Activated T-helper 1 cell treated with anti-CD3 and anti-CD28 coated beads, Interleukin-12 subunit alpha, Interleukin-12 subunit beta, Interleukin-2, Interleukin-4 antibody, amounts not matched to agents 30 ng/mL and 10 ng/mL and 1 ng/mL, durations not matched to agents 14 hours and 24 hours and 36 hours (primary cell): ENCODE measurements at regions of chr9 and their contacts with region 1.

Region 1: GRCh38 chr9:6412487-6413364 is at the start of gene UHRF2:
- DNase-seq: peak; percentile 97
- H3K4me3 Mint-ChIP-seq: peak within 1 kb of the TSS; percentile 89
- H3K27ac Mint-ChIP-seq: peak within 1 kb of the TSS; percentile 92
- H3K4me1 Mint-ChIP-seq: peaks cover 27% of the 10 kb centered on the region
- H3K27me3 Mint-ChIP-seq: no peaks in the 10 kb centered on the region
- total RNA-seq, gene UHRF2: 73.0 and 77.3 TPM in 2 replicates

Region 2: GRCh38 chr9:5843794-5844504 is 568.8 kb before region 1 on chr9:
- intact Hi-C with region 1: loop called (anchors 2 kb)
- DNase-seq: no peak
- H3K4me3 Mint-ChIP-seq: peak overlapping the region; percentile 69
- H3K27ac Mint-ChIP-seq: peak overlapping the region; percentile 88
- H3K4me1 Mint-ChIP-seq: peaks cover 88% of the 10 kb centered on the region
- H3K27me3 Mint-ChIP-seq: no peaks in the 10 kb centered on the region

Region 3: GRCh38 chr9:6106576-6107339 is 306.0 kb before region 1 on chr9:
- intact Hi-C with region 1: no loop called
- DNase-seq: no peak
- H3K4me3 Mint-ChIP-seq: no peak overlapping the region
- H3K27ac Mint-ChIP-seq: no peak overlapping the region
- H3K4me1 Mint-ChIP-seq: no peaks in the 10 kb centered on the region
- H3K27me3 Mint-ChIP-seq: no peaks in the 10 kb centered on the region

Region 4: DNA sequence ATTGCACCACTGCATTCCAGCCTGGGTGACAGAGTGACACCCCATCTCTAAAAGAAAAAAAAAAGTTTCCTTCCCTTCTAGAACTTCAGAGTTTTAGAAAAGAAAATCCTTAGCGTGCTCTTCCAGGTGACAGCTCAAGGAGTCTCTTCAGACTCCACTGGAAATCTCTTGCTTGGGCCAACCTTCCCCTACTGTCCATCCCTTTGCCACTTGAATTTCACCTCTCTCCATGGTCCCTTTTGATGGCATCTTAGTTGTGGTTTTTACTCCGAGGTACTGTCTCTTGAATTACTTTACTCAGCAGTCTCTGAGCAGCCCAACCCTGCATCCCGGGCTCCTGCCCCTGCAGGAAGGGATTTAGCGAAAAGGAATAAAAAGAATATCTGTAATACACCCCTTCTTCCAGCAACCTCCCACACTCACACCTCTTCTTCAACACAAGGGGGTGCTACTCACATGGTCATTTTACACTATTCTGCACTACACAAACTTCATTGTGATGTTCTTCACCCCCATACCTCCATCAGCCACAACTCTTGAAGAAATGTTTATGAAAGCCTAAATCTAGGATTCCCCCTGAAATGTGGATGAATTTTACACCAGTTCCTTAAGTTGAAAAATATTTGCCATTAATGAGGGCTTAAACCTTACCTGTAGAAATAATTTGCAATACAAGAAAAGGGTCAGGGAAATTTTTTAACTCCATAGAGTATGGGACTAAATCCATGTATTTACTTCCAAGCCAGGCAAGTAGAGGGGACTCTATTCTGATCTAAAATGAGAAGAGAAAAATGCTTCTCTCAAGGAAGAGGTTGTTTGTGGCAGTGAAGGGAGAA is 58.7 kb before region 1 on chr9:
- intact Hi-C with region 1: loop called (anchors 1 kb)
- DNase-seq: peak; percentile 24
- H3K4me3 Mint-ChIP-seq: no peak overlapping the region
- H3K27ac Mint-ChIP-seq: no peak overlapping the region
- H3K4me1 Mint-ChIP-seq: peaks cover 20% of the 10 kb centered on the region
- H3K27me3 Mint-ChIP-seq: peaks cover 20% of the 10 kb centered on the region

Region 5: GRCh38 chr9:6467006-6467625 is 54.4 kb after region 1 on chr9:
- intact Hi-C with region 1: loop called (anchors 2 kb)
- DNase-seq: no peak
- H3K4me3 Mint-ChIP-seq: no peak overlapping the region
- H3K27ac Mint-ChIP-seq: peak overlapping the region; percentile 8
- H3K4me1 Mint-ChIP-seq: peaks cover 25% of the 10 kb centered on the region
- H3K27me3 Mint-ChIP-seq: no peaks in the 10 kb centered on the region

Region 6: GRCh38 chr9:6566409-6567139 is 153.8 kb after region 1 on chr9:
- intact Hi-C with region 1: loop called (anchors 1 kb)
- DNase-seq: peak; percentile 44
- H3K4me3 Mint-ChIP-seq: peak overlapping the region; percentile 57
- H3K27ac Mint-ChIP-seq: peak overlapping the region; percentile 80
- H3K4me1 Mint-ChIP-seq: peaks cover 26% of the 10 kb centered on the region
- H3K27me3 Mint-ChIP-seq: peaks cover 4% of the 10 kb centered on the region

Region 7: GRCh38 chr9:6703898-6704639 is 291.3 kb after region 1 on chr9:
- intact Hi-C with region 1: loop called (anchors 1 kb)
- DNase-seq: peak; percentile 84
- H3K4me3 Mint-ChIP-seq: peak overlapping the region; percentile 89
- H3K27ac Mint-ChIP-seq: peak overlapping the region; percentile 91
- H3K4me1 Mint-ChIP-seq: peaks cover 14% of the 10 kb centered on the region
- H3K27me3 Mint-ChIP-seq: peaks cover 4% of the 10 kb centered on the region

Region 8: DNA sequence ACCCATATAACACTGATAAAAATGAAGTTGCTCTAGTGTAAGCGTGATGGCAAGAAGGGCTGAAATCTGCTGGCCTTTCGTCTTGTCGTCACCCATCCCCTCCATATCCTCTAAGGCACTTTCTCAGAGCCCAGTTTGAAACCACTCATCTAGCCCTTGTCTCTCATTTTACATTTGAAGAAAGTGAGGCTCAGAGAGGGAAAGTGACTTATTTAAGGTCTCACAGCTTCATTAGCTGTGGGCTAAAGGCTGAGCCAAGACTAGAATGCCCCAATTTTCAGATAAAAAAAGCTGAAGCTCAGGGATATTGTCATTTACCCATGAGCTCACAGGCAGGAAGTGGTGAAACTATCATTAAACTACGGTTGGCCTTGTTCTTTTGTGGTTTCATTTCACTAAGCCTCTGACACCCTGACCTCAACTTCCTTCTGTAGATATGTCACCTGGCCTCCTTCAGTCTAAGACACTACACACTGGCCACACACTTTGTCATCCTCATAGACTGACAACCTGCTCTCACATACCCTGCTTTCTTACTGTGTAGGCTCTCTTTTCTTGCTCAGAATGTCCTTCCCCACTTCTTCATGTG is 1563.5 kb after region 1 on chr9:
- intact Hi-C with region 1: loop called (anchors 2 kb)
- DNase-seq: peak; percentile 68
- H3K4me3 Mint-ChIP-seq: peak overlapping the region; percentile 15
- H3K27ac Mint-ChIP-seq: peak overlapping the region; percentile 73
- H3K4me1 Mint-ChIP-seq: peaks cover 63% of the 10 kb centered on the region
- H3K27me3 Mint-ChIP-seq: no peaks in the 10 kb centered on the region